ENCODE measurements at regions of chr4 and their contacts with region 1.

Region 1: DNA sequence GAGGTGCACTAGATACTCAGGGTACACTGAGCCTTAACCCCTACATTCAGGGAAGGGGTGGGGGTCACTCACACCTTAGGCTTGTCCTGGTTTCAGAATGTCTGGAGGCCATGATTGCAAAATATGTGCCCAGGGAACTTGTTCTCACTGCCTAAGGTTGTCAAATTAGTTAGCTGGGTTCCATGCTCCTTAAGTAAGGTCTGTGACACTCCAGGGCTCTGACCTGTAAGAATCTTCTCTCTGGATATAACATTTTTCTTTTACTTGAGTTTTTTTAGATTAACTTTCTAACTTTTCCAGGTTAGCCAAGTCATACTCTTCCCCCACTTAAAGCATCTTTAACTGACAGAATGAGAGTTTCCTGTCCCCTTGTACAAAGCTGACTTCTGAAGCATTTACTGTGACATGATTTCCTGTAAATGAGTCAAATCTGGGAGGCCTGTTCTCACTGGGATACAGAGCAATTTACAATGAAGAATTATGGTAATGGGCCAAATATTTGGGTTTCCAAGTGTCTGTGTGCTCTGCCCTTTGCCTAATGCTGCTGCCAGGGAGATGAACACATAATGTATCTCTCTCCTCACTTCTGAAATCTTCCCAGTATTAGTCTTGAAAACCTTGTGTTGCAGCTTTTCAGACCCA is 101.7 kb downstream of the GATB start:
- DNase-seq: no peak
- H3K4me3 ChIP-seq: no peak overlapping the region
- CTCF ChIP-seq: no peak
- POLR2A ChIP-seq: no peak

Region 2: GRCh38 chr4:150699599-150699998 is 959.5 kb before region 1 on chr4:
- intact Hi-C with region 1: no loop called
- DNase-seq: no peak
- H3K4me3 ChIP-seq: no peak overlapping the region
- CTCF ChIP-seq: no peak
- POLR2A ChIP-seq: no peak

Region 3: DNA sequence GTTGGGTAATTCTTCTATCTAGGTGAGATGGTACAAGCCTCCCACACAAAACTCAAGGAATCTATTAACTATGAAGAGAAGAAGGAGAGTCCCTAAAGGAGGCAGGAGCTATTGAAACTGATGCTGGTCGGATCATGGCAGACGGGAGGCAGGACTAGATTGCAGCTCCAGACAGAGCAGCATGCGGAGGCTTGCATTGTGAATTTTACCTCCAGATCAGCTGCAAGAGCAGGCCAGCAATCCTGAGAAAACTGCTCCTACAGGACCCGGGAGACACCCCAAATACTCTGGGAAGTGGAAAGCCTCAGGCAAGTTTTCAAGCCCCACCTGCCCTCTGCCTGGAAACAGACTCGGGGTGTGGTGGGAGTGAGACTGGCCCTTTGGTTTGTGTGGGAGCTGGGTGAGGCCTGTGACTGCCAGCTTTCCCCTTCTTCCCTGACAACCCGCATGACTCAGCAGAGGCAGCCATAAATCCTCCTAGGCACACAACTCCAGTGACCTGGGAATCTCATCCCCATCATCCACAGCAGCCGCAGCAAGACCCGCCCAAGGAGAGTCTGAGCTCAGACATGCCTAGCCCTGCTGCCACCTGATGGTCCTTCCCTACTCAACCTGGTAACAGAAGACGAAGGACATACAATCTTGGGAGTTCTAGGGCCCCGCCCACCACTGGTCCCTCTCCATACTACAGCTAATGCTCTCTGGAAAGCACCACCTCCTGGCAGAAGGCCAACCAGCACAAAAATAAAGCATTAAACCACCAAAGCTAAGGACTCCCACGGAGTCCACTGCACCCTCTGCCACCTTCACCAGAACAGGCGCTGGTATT is 70.9 kb after region 1 on chr4:
- intact Hi-C with region 1: loop called (anchors 2 kb)
- DNase-seq: peak in 1 of 2 donors; percentile 59
- H3K4me3 ChIP-seq: no peak overlapping the region
- CTCF ChIP-seq: no peak
- POLR2A ChIP-seq: no peak